Dendritic cell treated with granulocyte-macrophage colony-stimulating factor and Interleukin-4, amounts not matched to agents 40 ng/mL and 50 ng/mL, for 4 days (primary cell): ENCODE measurements at regions of chr14 and their contacts with region 1.

Region 1: GRCh38 chr14:54488646-54489317 is at the start of gene GMFB:
- H3K4me3 Mint-ChIP-seq: peak within 1 kb of the TSS; percentile 70
- H3K27ac Mint-ChIP-seq: peak within 1 kb of the TSS; percentile 89
- H3K4me1 Mint-ChIP-seq: peaks cover 73% of the 10 kb centered on the region
- H3K27me3 Mint-ChIP-seq: no peaks in the 10 kb centered on the region

Region 2: DNA sequence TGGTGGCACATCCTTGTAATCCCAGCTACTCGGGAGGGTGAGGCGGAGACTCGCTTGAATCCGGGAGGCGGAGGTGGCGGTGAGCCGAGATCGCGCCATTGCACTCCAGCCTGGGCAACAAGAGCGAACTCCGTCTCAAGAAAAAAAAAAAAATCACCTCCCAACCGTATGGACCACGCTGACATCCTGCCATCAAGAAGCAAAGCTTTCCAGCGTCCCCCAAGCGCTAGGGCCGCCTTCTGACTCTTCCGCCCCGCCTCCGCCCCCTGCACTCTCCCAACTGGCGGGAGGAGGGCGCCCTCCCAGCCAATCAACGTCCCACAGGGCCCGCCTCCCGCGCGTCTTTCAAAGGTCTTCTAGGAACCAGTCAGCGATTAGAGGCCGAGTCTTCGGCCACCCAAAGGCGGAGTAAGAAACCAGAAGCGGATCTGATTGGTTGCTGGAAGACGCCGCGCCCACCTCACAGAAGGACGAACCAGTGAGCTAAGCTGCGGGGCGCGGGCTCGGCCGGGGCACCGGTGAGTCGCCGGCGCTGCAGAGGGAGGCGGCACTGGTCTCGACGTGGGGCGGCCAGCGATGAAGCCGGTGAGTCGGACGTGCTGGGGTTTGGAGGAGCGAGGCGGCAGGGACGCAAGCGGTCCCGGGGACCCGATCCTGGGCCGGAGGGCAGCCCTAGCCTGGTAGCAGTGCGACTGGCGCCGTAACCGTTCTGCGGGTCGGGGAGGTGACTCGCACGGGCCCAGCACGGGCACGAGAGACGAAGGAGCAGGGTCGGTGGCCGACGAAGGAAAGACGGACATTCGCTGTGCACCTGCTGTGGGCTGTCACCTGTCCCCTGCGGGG is 92.1 kb before region 1 on chr14 and contains the start of gene CDKN3:
- intact Hi-C with region 1: loop called (anchors 2 kb)
- H3K4me3 Mint-ChIP-seq: peak within 1 kb of the TSS; percentile 87
- H3K27ac Mint-ChIP-seq: peak within 1 kb of the TSS; percentile 73
- H3K4me1 Mint-ChIP-seq: peaks cover 19% of the 10 kb centered on the region
- H3K27me3 Mint-ChIP-seq: no peaks in the 10 kb centered on the region

Region 3: GRCh38 chr14:54450535-54450934 is 38.2 kb before region 1 on chr14:
- intact Hi-C with region 1: loop called (anchors 5 kb)
- H3K4me3 Mint-ChIP-seq: peak overlapping the region; percentile 30
- H3K27ac Mint-ChIP-seq: peak overlapping the region; percentile 87
- H3K4me1 Mint-ChIP-seq: peaks cover 49% of the 10 kb centered on the region
- H3K27me3 Mint-ChIP-seq: no peaks in the 10 kb centered on the region

Region 4: GRCh38 chr14:54509546-54510501 is 21.0 kb after region 1 on chr14 and contains the start of gene CGRRF1:
- intact Hi-C with region 1: loop called (anchors 1 kb)
- H3K4me3 Mint-ChIP-seq: peak within 1 kb of the TSS; percentile 99
- H3K27ac Mint-ChIP-seq: peak within 1 kb of the TSS; percentile 95
- H3K4me1 Mint-ChIP-seq: peaks cover 29% of the 10 kb centered on the region
- H3K27me3 Mint-ChIP-seq: no peaks in the 10 kb centered on the region